Heart right ventricle (tissue), 16 donors: ENCODE measurements at regions of chr18 and their contacts with region 1.

Region 1: GRCh38 chr18:48030616-48031480 is 100.4 kb upstream of the SMAD2 start:
- DNase-seq: peak in 1 of 2 donors; percentile 65
- ATAC-seq: peak; percentile 56 to 86 (median 72)
- H3K4me3 ChIP-seq: no peak overlapping the region
- H3K27ac ChIP-seq: no peak overlapping the region
- H3K4me1 ChIP-seq: peaks cover 4 to 32% (median 8%) of the 10 kb centered on the region in 9 donors
- H3K27me3 ChIP-seq: no peaks in the 10 kb centered on the region
- CTCF ChIP-seq: peak; percentile 51 to 83 (median 75)

Region 2: DNA sequence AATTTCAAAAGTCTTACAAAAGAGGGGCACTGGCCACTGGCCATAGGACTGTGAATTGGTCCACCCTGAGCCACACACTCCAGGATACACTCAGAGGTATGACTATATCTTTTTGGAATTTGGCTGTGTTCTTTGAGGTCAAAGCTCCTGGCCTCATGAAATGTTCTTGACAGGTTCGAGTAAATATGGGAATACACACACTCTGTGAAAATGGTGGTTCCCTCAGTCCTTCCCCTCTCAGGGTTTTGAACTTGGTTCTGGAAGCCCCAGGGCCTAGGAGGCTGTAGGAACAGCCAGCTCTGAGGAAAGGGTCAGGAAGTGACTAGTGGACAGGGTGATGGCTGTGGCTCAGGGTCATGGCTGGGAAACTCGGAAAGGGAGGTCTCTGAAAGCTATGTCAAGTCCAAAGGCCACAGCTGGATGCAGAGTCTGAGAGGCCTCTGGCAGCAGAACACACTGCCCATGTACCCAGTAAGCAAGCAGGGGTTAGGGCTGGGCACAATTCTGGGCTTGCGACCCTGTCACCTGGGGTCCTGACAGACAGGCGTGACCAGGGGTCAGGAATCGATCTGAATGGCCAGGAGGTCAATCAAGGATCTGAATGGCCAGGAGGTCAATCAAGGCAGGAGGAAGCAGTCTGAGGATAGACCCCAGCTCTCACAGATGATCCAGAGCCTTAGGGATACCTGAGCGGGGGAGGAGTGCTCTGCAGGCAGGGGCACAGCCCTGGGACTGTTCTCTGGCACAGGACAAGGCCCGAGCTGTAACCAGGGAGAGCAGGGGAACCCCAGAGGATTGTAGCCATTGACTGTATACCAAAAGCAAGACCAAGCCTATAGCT is 123.0 kb after region 1 on chr18:
- intact Hi-C with region 1: loop called in 1 of 10 experiments (anchors 10 kb)
- DNase-seq: no peak
- ATAC-seq: peak in 5 of 8 donors; percentile 29 to 63 (median 49)
- H3K4me3 ChIP-seq: no peak overlapping the region
- H3K27ac ChIP-seq: no peak overlapping the region
- H3K4me1 ChIP-seq: peaks cover 0 to 18% (median 0%) of the 10 kb centered on the region in 9 donors
- H3K27me3 ChIP-seq: no peaks in the 10 kb centered on the region
- CTCF ChIP-seq: no peak

Region 3: GRCh38 chr18:48222118-48222517 is 191.3 kb after region 1 on chr18:
- intact Hi-C with region 1: loop called in 2 of 10 experiments (anchors 5 to 10 kb)
- DNase-seq: peak in 1 of 2 donors; percentile 69
- ATAC-seq: peak in 7 of 8 donors; percentile 61 to 90 (median 73)
- H3K4me3 ChIP-seq: no peak overlapping the region
- H3K27ac ChIP-seq: no peak overlapping the region
- H3K4me1 ChIP-seq: peaks cover 2 to 23% (median 9%) of the 10 kb centered on the region in 9 donors
- H3K27me3 ChIP-seq: no peaks in the 10 kb centered on the region
- CTCF ChIP-seq: no peak

Region 4: DNA sequence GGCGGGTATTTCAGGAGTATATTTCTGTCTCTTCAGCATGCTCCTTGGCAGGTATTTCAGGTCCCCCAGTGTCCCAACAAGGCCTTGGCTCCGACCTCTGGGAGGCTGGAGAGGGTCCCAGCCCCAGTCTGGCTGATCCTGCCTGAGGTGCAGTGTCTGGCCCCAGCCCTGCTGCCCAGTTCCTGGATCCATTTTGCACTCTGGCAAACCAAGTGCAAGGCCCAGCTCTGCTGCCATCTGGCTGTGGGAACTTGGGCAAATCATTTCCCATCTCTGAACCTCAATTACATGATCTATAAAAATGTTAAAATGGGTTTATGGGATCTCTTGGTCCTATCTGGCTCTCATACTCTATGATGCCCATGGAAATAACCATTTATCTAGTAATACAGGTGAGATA is 314.7 kb after region 1 on chr18:
- intact Hi-C with region 1: loop called in 7 of 10 experiments (anchors 10 kb)
- DNase-seq: no peak
- ATAC-seq: peak in 1 of 8 donors; percentile 54
- H3K4me3 ChIP-seq: no peak overlapping the region
- H3K27ac ChIP-seq: no peak overlapping the region
- H3K4me1 ChIP-seq: peaks cover 0 to 32% (median 9%) of the 10 kb centered on the region in 9 donors
- H3K27me3 ChIP-seq: no peaks in the 10 kb centered on the region
- CTCF ChIP-seq: peak in 7 of 9 donors; percentile 26 to 45 (median 33)